ENCODE measurements at regions of chr7 and their contacts with region 1.

Region 1: GRCh38 chr7:135662373-135663114 is at the start of gene STMP1:
- DNase-seq: peak; percentile 98 to 99
- ATAC-seq: peak; percentile 100
- H3K4me3 ChIP-seq: peak within 1 kb of the TSS; percentile 82 to 92
- H3K27ac ChIP-seq: peak within 1 kb of the TSS; percentile 25 to 97
- H3K4me1 ChIP-seq: peaks cover 0 to 3% of the 10 kb centered on the region in 2 donors
- H3K27me3 ChIP-seq: no peaks in the 10 kb centered on the region
- total RNA-seq, gene STMP1: 29.8 to 42.6 TPM

Region 2: GRCh38 chr7:135441791-135442190 is 220.8 kb before region 1 on chr7:
- intact Hi-C with region 1: no loop called
- DNase-seq: no peak
- ATAC-seq: no peak
- H3K4me3 ChIP-seq: no peak overlapping the region
- H3K27ac ChIP-seq: no peak overlapping the region
- H3K4me1 ChIP-seq: no peaks in the 10 kb centered on the region
- H3K27me3 ChIP-seq: no peaks in the 10 kb centered on the region

Region 3: GRCh38 chr7:135745703-135746312 is 83.3 kb after region 1 on chr7:
- intact Hi-C with region 1: loop called in 1 of 2 experiments (anchors 5 kb)
- DNase-seq: peak; percentile 86 to 89
- ATAC-seq: peak; percentile 89
- H3K4me3 ChIP-seq: no peak overlapping the region
- H3K27ac ChIP-seq: peak overlapping the region; percentile 73 to 92
- H3K4me1 ChIP-seq: no peaks in the 10 kb centered on the region
- H3K27me3 ChIP-seq: no peaks in the 10 kb centered on the region

Region 4: GRCh38 chr7:135977007-135977741 is 314.6 kb after region 1 on chr7 and contains the start of gene MTPN:
- intact Hi-C with region 1: loop called (anchors 1 to 2 kb)
- DNase-seq: peak; percentile 100
- ATAC-seq: peak; percentile 100
- H3K4me3 ChIP-seq: peak within 1 kb of the TSS; percentile 82 to 93
- H3K27ac ChIP-seq: peak within 1 kb of the TSS; percentile 20 to 65
- H3K4me1 ChIP-seq: peaks cover 2 to 4% of the 10 kb centered on the region in 2 donors
- H3K27me3 ChIP-seq: no peaks in the 10 kb centered on the region
- total RNA-seq, gene MTPN: 89.3 to 92.6 TPM

Region 5: GRCh38 chr7:136009488-136010079 is 347.0 kb after region 1 on chr7:
- intact Hi-C with region 1: loop called (anchors 2 to 5 kb)
- DNase-seq: no peak
- ATAC-seq: peak; percentile 68
- H3K4me3 ChIP-seq: no peak overlapping the region
- H3K27ac ChIP-seq: no peak overlapping the region
- H3K4me1 ChIP-seq: no peaks in the 10 kb centered on the region
- H3K27me3 ChIP-seq: no peaks in the 10 kb centered on the region